CD4-positive, alpha-beta memory T cell (primary cell): ENCODE measurements at regions of chr1 and their contacts with region 1.

Region 1: GRCh38 chr1:35715568-35716002 is 3.1 kb downstream of the C1orf216 start:
- DNase-seq: peak; percentile 67 to 75 (median 71)
- H3K4me3 ChIP-seq: no peak overlapping the region
- H3K4me3 Mint-ChIP-seq: peak overlapping the region in 7 of 8 donors; percentile 9 to 88 (median 72)
- H3K27ac ChIP-seq: no peak overlapping the region
- H3K27ac Mint-ChIP-seq: peak overlapping the region; percentile 2 to 88 (median 36)
- H3K4me1 ChIP-seq: peaks cover 33% of the 10 kb centered on the region
- H3K4me1 Mint-ChIP-seq: peaks cover 29 to 43% (median 33%) of the 10 kb centered on the region in 4 donors
- H3K27me3 ChIP-seq: no peaks in the 10 kb centered on the region
- H3K27me3 Mint-ChIP-seq: no peaks in the 10 kb centered on the region

Region 2: GRCh38 chr1:35192853-35193664 is 522.5 kb before region 1 on chr1 and contains the start of gene SFPQ:
- CTCF ChIA-PET with region 1: no interaction called
- POLR2A ChIA-PET with region 1: no interaction called
- intact Hi-C with region 1: loop called (anchors 5 kb)
- DNase-seq: peak; percentile 97 to 99 (median 98)
- H3K4me3 ChIP-seq: peak within 1 kb of the TSS; percentile 43 to 61
- H3K4me3 Mint-ChIP-seq: peak within 1 kb of the TSS; percentile 87 to 98 (median 96)
- H3K27ac ChIP-seq: peak within 1 kb of the TSS; percentile 91
- H3K27ac Mint-ChIP-seq: peak within 1 kb of the TSS; percentile 96 to 100 (median 99)
- H3K4me1 ChIP-seq: peaks cover 39% of the 10 kb centered on the region
- H3K4me1 Mint-ChIP-seq: peaks cover 33 to 58% (median 42%) of the 10 kb centered on the region in 4 donors
- H3K27me3 ChIP-seq: no peaks in the 10 kb centered on the region
- H3K27me3 Mint-ChIP-seq: no peaks in the 10 kb centered on the region
- total RNA-seq, gene SFPQ: 321 to 334 TPM

Region 3: GRCh38 chr1:35577071-35577998 is 138.2 kb before region 1 on chr1:
- CTCF ChIA-PET with region 1: interaction called, 41 read pairs
- POLR2A ChIA-PET with region 1: interaction called, 8 read pairs
- intact Hi-C with region 1: no loop called
- DNase-seq: peak; percentile 61 to 76 (median 71)
- H3K4me3 ChIP-seq: peak overlapping the region; percentile 42 to 50
- H3K4me3 Mint-ChIP-seq: peak overlapping the region; percentile 82 to 96 (median 88)
- H3K27ac ChIP-seq: peak overlapping the region; percentile 58
- H3K27ac Mint-ChIP-seq: peak overlapping the region; percentile 32 to 93 (median 77)
- H3K4me1 ChIP-seq: peaks cover 28% of the 10 kb centered on the region
- H3K4me1 Mint-ChIP-seq: peaks cover 10 to 31% (median 20%) of the 10 kb centered on the region in 4 donors
- H3K27me3 ChIP-seq: no peaks in the 10 kb centered on the region
- H3K27me3 Mint-ChIP-seq: peaks cover 1 to 2% of the 10 kb centered on the region in 2 donors

Region 4: DNA sequence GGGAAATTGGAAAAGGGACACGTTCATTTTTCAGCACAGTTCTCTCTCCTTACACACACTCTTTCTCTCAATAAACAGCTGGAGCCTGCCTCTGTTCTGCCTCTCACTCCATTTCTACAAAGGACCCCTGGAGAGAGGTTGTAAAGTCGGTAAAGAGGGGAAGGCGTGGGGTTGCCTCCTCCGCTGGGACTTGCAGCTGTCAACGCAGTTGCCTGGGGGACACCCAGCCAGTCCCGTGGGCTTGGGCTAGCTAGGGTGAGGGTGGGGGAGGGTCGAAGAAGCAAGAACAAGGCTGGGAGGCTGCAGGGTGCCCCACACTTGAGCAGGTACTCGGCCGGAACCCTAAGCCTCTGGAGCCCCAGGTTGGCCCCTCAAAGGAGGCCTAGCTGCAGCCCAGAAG is 24.5 kb before region 1 on chr1:
- CTCF ChIA-PET with region 1: interaction called, 12 read pairs
- POLR2A ChIA-PET with region 1: no interaction called
- intact Hi-C with region 1: no loop called
- DNase-seq: no peak
- H3K4me3 ChIP-seq: no peak overlapping the region
- H3K4me3 Mint-ChIP-seq: no peak overlapping the region
- H3K27ac ChIP-seq: no peak overlapping the region
- H3K27ac Mint-ChIP-seq: no peak overlapping the region
- H3K4me1 ChIP-seq: no peaks in the 10 kb centered on the region
- H3K4me1 Mint-ChIP-seq: peaks cover 0 to 2% (median 0%) of the 10 kb centered on the region in 4 donors
- H3K27me3 ChIP-seq: no peaks in the 10 kb centered on the region
- H3K27me3 Mint-ChIP-seq: peaks cover 15 to 21% of the 10 kb centered on the region in 2 donors

Region 5: GRCh38 chr1:35769759-35770446 is 54.3 kb after region 1 on chr1 and contains the start of gene CLSPN:
- CTCF ChIA-PET with region 1: interaction called, 19 read pairs
- POLR2A ChIA-PET with region 1: interaction called, 3 read pairs
- intact Hi-C with region 1: loop called (anchors 2 kb)
- DNase-seq: peak; percentile 90 to 94 (median 92)
- H3K4me3 ChIP-seq: peak within 1 kb of the TSS; percentile 74 to 84
- H3K4me3 Mint-ChIP-seq: peak within 1 kb of the TSS; percentile 95 to 99 (median 98)
- H3K27ac ChIP-seq: peak within 1 kb of the TSS; percentile 82
- H3K27ac Mint-ChIP-seq: peak within 1 kb of the TSS; percentile 86 to 97 (median 96)
- H3K4me1 ChIP-seq: peaks cover 7% of the 10 kb centered on the region
- H3K4me1 Mint-ChIP-seq: peaks cover 6 to 17% (median 10%) of the 10 kb centered on the region in 4 donors
- H3K27me3 ChIP-seq: no peaks in the 10 kb centered on the region
- H3K27me3 Mint-ChIP-seq: no peaks in the 10 kb centered on the region
- total RNA-seq, gene CLSPN: 0.28 to 0.90 TPM

Region 6: DNA sequence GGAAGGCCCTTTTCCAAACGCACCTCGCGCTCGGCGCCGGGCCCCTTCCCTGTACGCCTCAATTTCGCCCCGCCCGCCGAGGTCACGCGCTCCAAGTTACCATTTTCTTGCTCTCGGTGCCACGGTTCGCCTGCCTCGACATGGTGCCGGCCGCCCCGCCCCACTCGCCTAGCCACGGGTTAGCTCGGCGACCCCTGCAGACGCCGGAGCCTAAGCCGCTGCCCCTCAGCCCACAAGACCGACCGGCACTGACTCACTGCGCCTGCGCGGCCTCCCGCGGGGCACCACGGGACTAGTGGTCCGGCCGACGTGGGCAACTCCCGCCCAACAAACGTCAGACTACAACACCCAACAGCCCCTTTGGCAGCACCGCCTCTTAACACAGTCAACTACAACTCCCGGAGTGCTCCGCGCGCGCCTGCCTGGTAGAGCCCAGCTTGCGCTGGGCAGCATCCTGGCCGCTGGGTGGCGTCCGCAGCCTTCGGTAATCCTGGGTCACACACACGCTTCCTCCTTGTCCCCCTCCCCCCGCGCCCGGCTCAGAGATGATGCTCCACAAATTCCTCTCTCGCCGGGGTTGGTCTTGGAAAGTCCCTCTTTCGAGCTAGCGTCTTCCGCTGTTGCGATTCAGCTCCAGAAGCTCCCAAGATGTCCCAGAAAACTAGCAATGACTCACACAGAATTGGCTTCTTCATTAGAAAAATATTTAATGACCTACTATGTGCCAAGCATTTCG is 433.8 kb after region 1 on chr1 and contains the start of gene TRAPPC3:
- CTCF ChIA-PET with region 1: no interaction called
- POLR2A ChIA-PET with region 1: no interaction called
- intact Hi-C with region 1: no loop called
- DNase-seq: peak; percentile 99 to 100 (median 99)
- H3K4me3 ChIP-seq: peak within 1 kb of the TSS; percentile 70 to 98
- H3K4me3 Mint-ChIP-seq: peak within 1 kb of the TSS; percentile 95 to 100 (median 98)
- H3K27ac ChIP-seq: peak within 1 kb of the TSS; percentile 88
- H3K27ac Mint-ChIP-seq: peak within 1 kb of the TSS; percentile 94 to 100 (median 99)
- H3K4me1 ChIP-seq: peaks cover 68% of the 10 kb centered on the region
- H3K4me1 Mint-ChIP-seq: peaks cover 46 to 84% (median 63%) of the 10 kb centered on the region in 4 donors
- H3K27me3 ChIP-seq: no peaks in the 10 kb centered on the region
- H3K27me3 Mint-ChIP-seq: no peaks in the 10 kb centered on the region
- total RNA-seq, gene TRAPPC3: 51.8 to 56.4 TPM